CD8-positive, alpha-beta T cell (primary cell): ENCODE measurements at regions of chr13 and their contacts with region 1.

Region 1: GRCh38 chr13:106536244-106537034 is 977 bp upstream of the EFNB2 start:
- DNase-seq: peak; percentile 75 to 96 (median 90)
- ATAC-seq: peak; percentile 44
- H3K4me3 ChIP-seq: peak overlapping the region; percentile 76 to 83
- H3K4me3 Mint-ChIP-seq: peak overlapping the region; percentile 95
- H3K27ac ChIP-seq: no peak overlapping the region
- H3K27ac Mint-ChIP-seq: peak overlapping the region; percentile 45
- H3K4me1 ChIP-seq: peaks cover 15% of the 10 kb centered on the region
- H3K4me1 Mint-ChIP-seq: peaks cover 20% of the 10 kb centered on the region
- H3K27me3 ChIP-seq: peaks cover 15% of the 10 kb centered on the region in 2 experiments
- H3K27me3 Mint-ChIP-seq: peaks cover 22% of the 10 kb centered on the region
- CTCF ChIP-seq: peak; percentile 89

Region 2: DNA sequence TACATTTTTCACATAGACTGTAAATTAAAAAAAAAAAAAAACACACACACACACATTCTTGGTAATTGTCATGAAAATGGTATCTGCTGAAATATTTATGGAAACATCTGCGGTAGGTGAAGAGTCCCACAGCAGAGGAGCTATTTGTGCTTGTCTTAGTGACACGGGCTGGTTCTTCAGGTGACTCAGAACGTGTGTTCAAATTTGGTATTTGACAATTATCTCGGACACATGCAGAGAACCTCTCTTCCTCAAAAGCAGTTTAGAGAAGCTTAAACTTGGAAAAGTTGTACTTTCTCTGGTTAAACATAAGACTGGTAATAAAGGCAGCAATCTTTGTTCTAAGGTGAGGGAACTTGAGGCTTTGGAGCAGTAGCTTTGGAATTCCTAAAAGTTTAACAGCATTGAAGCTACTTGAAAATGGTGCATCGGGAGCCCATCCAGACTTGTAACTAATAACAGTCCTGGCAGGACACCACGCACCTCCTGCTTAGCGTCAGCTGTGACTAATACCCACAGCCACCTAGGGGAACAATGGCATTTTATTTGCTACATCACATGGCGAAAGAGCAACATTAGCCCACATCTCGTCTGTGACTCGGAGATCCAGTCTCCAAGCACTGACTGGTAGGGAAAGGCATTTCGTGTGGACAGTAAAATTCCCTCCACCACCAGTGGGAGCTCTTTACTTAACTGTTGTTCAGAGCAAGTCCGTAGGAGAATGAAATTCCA is 1965.1 kb before region 1 on chr13:
- CTCF ChIA-PET with region 1: interaction called, 4 read pairs
- POLR2A ChIA-PET with region 1: no interaction called
- intact Hi-C with region 1: loop called (anchors 5 kb)
- DNase-seq: peak in 1 of 9 experiments; percentile 30
- ATAC-seq: no peak
- H3K4me3 ChIP-seq: no peak overlapping the region
- H3K4me3 Mint-ChIP-seq: no peak overlapping the region
- H3K27ac ChIP-seq: no peak overlapping the region
- H3K27ac Mint-ChIP-seq: no peak overlapping the region
- H3K4me1 ChIP-seq: no peaks in the 10 kb centered on the region
- H3K4me1 Mint-ChIP-seq: no peaks in the 10 kb centered on the region
- H3K27me3 ChIP-seq: no peaks in the 10 kb centered on the region
- H3K27me3 Mint-ChIP-seq: no peaks in the 10 kb centered on the region
- CTCF ChIP-seq: no peak

Region 3: GRCh38 chr13:105139380-105140285 is 1396.8 kb before region 1 on chr13:
- CTCF ChIA-PET with region 1: no interaction called
- POLR2A ChIA-PET with region 1: no interaction called
- intact Hi-C with region 1: loop called (anchors 5 to 10 kb)
- DNase-seq: peak; percentile 18 to 82 (median 60)
- ATAC-seq: peak; percentile 92
- H3K4me3 ChIP-seq: peak overlapping the region; percentile 66 to 73
- H3K4me3 Mint-ChIP-seq: peak overlapping the region; percentile 94
- H3K27ac ChIP-seq: peak overlapping the region; percentile 78 to 94
- H3K27ac Mint-ChIP-seq: peak overlapping the region; percentile 95
- H3K4me1 ChIP-seq: peaks cover 10% of the 10 kb centered on the region
- H3K4me1 Mint-ChIP-seq: peaks cover 21% of the 10 kb centered on the region
- H3K27me3 ChIP-seq: no peaks in the 10 kb centered on the region
- H3K27me3 Mint-ChIP-seq: no peaks in the 10 kb centered on the region
- CTCF ChIP-seq: no peak

Region 4: GRCh38 chr13:106548064-106548696 is 11.7 kb after region 1 on chr13:
- CTCF ChIA-PET with region 1: interaction called, 16 read pairs
- POLR2A ChIA-PET with region 1: no interaction called
- intact Hi-C with region 1: no loop called
- DNase-seq: no peak
- ATAC-seq: no peak
- H3K4me3 ChIP-seq: no peak overlapping the region
- H3K4me3 Mint-ChIP-seq: no peak overlapping the region
- H3K27ac ChIP-seq: no peak overlapping the region
- H3K27ac Mint-ChIP-seq: peak overlapping the region; percentile 6
- H3K4me1 ChIP-seq: no peaks in the 10 kb centered on the region
- H3K4me1 Mint-ChIP-seq: peaks cover 35% of the 10 kb centered on the region
- H3K27me3 ChIP-seq: no peaks in the 10 kb centered on the region
- H3K27me3 Mint-ChIP-seq: no peaks in the 10 kb centered on the region
- CTCF ChIP-seq: no peak

Region 5: GRCh38 chr13:106567474-106568298 is 31.2 kb after region 1 on chr13 and contains the start of gene ARGLU1:
- CTCF ChIA-PET with region 1: interaction called, 50 read pairs
- POLR2A ChIA-PET with region 1: interaction called, 9 read pairs
- intact Hi-C with region 1: loop called (anchors 1 kb)
- DNase-seq: peak; percentile 92 to 98 (median 95)
- ATAC-seq: peak; percentile 81
- H3K4me3 ChIP-seq: peak within 1 kb of the TSS; percentile 79 to 91
- H3K4me3 Mint-ChIP-seq: peak within 1 kb of the TSS; percentile 98
- H3K27ac ChIP-seq: peak within 1 kb of the TSS; percentile 91 to 94
- H3K27ac Mint-ChIP-seq: peak within 1 kb of the TSS; percentile 95
- H3K4me1 ChIP-seq: peaks cover 41% of the 10 kb centered on the region
- H3K4me1 Mint-ChIP-seq: peaks cover 58% of the 10 kb centered on the region
- H3K27me3 ChIP-seq: no peaks in the 10 kb centered on the region
- H3K27me3 Mint-ChIP-seq: no peaks in the 10 kb centered on the region
- CTCF ChIP-seq: no peak
- total RNA-seq, gene ARGLU1: 130 to 145 TPM

Region 6: DNA sequence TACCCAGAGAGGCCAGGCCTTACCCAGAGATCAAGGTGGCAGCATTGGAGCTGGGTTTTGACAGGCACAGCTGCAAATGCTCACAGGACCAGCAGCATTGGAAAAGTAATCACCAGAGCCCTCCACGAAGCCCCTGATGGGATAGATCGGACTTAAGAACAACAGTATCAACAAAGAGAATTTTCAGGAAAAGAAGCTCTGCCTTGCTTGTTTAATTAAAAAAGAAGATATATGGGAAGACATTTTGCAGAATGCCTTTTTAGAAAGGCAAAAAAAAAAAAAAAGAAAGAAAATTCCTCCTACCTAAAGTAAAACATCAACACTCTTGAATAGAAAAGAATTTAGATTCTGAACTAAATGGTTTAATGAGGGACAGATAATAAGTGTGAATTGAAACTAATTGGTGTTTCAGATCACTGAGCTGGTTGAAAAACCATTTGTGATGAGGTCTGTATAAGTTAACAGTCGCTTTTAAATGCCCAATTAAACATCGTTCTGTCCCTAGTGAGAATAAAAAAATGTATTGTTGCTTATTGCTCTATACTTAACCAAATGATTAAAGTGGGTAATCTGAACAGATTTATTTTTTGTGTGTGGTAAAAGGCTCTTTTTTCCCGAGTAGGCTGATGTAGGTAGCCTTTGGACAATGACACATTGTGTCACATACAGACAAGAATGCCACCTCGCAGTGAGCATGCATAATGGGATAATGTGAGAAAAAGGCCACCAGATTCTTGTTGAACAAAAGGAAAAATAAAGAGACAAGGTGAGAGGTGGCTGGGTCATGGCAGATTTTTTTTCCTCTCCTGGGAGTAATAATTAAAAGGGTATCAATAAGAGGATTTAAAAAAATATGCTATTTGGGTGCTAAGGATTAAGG is 124.5 kb after region 1 on chr13:
- CTCF ChIA-PET with region 1: no interaction called
- POLR2A ChIA-PET with region 1: no interaction called
- intact Hi-C with region 1: no loop called
- DNase-seq: no peak
- ATAC-seq: no peak
- H3K4me3 ChIP-seq: no peak overlapping the region
- H3K4me3 Mint-ChIP-seq: no peak overlapping the region
- H3K27ac ChIP-seq: no peak overlapping the region
- H3K27ac Mint-ChIP-seq: no peak overlapping the region
- H3K4me1 ChIP-seq: no peaks in the 10 kb centered on the region
- H3K4me1 Mint-ChIP-seq: no peaks in the 10 kb centered on the region
- H3K27me3 ChIP-seq: no peaks in the 10 kb centered on the region
- H3K27me3 Mint-ChIP-seq: peaks cover 6% of the 10 kb centered on the region
- CTCF ChIP-seq: no peak